ENCODE measurements at regions of chr1 and their contacts with region 1.

Region 1: GRCh38 chr1:95407886-95408291 is 173.9 kb downstream of the RWDD3 start:
- DNase-seq: no peak
- H3K4me3 ChIP-seq: no peak overlapping the region
- H3K27ac ChIP-seq: no peak overlapping the region
- H3K4me1 ChIP-seq: no peaks in the 10 kb centered on the region
- H3K27me3 ChIP-seq: no peaks in the 10 kb centered on the region
- CTCF ChIP-seq: no peak
- EP300 ChIP-seq: no peak
- POLR2A ChIP-seq: no peak

Region 2: GRCh38 chr1:95325349-95325748 is 82.5 kb before region 1 on chr1:
- intact Hi-C with region 1: loop called in 1 of 4 experiments (anchors 1 kb)
- DNase-seq: no peak
- H3K4me3 ChIP-seq: no peak overlapping the region
- H3K27ac ChIP-seq: no peak overlapping the region
- H3K4me1 ChIP-seq: no peaks in the 10 kb centered on the region
- H3K27me3 ChIP-seq: no peaks in the 10 kb centered on the region
- CTCF ChIP-seq: no peak
- EP300 ChIP-seq: no peak
- POLR2A ChIP-seq: no peak

Measured in ovary (tissue), 10 donors.